Activated B cell treated with CpG ODN at 0.5 μM for 24 hours (primary cell): ENCODE measurements at regions of chr2 and their contacts with region 1.

Region 1: DNA sequence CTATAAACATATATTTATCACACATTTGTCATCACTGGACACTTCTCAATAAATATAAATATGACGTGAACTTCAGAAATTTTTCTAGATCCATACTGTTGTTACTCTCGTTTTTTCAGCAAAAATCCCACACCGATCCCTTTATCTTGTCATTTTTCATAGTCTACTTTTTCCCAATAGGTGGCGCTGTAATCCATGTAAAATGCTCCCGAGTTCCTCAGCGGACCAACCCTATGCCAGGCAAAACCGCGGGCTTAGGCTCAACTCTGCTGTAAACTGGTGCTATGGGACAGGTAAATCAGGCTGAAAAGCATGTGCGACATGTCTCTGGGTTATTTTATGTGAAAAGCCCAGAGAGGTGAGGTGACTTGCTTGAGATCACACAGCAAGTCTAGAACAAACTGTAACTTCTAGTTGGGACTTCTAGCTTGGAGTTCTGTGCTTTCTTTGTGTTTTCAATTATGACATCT is 104.0 kb downstream of the COBLL1 start:
- DNase-seq: peak; percentile 29
- ATAC-seq: peak; percentile 62
- H3K4me3 Mint-ChIP-seq: peak overlapping the region; percentile 21
- H3K27ac Mint-ChIP-seq: peak overlapping the region; percentile 74
- H3K4me1 Mint-ChIP-seq: peaks cover 72% of the 10 kb centered on the region
- H3K27me3 Mint-ChIP-seq: no peaks in the 10 kb centered on the region
- CTCF ChIP-seq: no peak

Region 2: GRCh38 chr2:164722616-164723338 is 14.9 kb before region 1 on chr2:
- CTCF ChIA-PET with region 1: no interaction called
- POLR2A ChIA-PET with region 1: no interaction called
- intact Hi-C with region 1: loop called (anchors 1 kb)
- DNase-seq: no peak
- ATAC-seq: no peak
- H3K4me3 Mint-ChIP-seq: no peak overlapping the region
- H3K27ac Mint-ChIP-seq: peak overlapping the region; percentile 12
- H3K4me1 Mint-ChIP-seq: peaks cover 19% of the 10 kb centered on the region
- H3K27me3 Mint-ChIP-seq: no peaks in the 10 kb centered on the region
- CTCF ChIP-seq: no peak

Region 3: DNA sequence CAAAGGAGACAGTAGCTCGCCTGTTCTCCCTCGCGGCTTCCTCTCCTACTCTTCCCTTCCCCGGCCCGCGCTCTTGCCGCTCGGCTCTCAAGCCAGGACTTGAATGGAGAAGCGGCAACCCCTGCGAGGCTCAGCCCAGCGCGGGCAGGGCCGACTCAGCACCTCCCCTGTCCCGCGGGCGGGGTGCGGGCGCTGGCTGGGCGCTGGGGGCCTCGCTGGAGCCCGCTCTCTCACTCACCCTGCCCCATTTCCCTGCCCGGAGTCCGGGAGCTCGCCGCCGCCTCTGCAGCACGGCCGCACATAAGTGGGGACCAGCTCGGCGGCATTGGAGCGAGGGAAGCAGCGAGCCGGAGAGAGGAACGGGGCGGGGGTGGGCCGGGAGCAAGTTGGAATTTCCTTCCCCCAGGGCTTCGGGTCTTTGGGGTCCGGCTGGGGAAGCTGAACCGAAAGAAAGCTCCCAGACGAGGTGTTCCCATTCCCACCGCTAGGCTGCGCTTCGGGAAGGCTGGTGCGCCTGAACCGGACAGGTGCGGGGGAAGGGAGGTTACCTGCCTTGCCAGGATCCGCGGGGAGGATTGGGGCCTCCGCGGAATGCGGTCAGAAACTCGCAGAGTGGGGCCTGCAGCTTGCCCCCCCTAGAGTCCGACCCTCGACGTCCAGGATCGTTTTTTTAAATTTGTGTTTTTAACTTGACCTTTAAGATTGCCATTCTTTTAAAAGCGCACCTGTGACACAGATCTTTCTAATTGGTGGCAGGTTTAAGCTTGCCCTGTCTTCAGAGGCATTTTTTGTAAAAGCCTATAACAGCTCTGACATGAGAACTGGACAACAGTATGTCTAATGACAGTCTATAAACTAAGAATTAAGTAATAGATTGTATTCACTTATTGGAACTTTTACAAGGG is 104.3 kb after region 1 on chr2 and contains the start of gene COBLL1:
- CTCF ChIA-PET with region 1: interaction called, 39 read pairs
- POLR2A ChIA-PET with region 1: interaction called, 44 read pairs
- intact Hi-C with region 1: loop called (anchors 1 kb)
- DNase-seq: peak; percentile 65
- ATAC-seq: peak; percentile 65
- H3K4me3 Mint-ChIP-seq: peak within 1 kb of the TSS; percentile 97
- H3K27ac Mint-ChIP-seq: peak within 1 kb of the TSS; percentile 91
- H3K4me1 Mint-ChIP-seq: peaks cover 44% of the 10 kb centered on the region
- H3K27me3 Mint-ChIP-seq: no peaks in the 10 kb centered on the region
- CTCF ChIP-seq: no peak
- total RNA-seq, gene COBLL1: 182 and 222 TPM in 2 replicates

Region 4: GRCh38 chr2:164974221-164974620 is 236.6 kb after region 1 on chr2:
- CTCF ChIA-PET with region 1: interaction called, 3 read pairs
- POLR2A ChIA-PET with region 1: no interaction called
- intact Hi-C with region 1: loop called (anchors 5 kb)
- DNase-seq: no peak
- ATAC-seq: no peak
- H3K4me3 Mint-ChIP-seq: peak overlapping the region; percentile 32
- H3K27ac Mint-ChIP-seq: peak overlapping the region; percentile 57
- H3K4me1 Mint-ChIP-seq: peaks cover 85% of the 10 kb centered on the region
- H3K27me3 Mint-ChIP-seq: no peaks in the 10 kb centered on the region
- CTCF ChIP-seq: no peak

Region 5: GRCh38 chr2:165203689-165204559 is 466.3 kb after region 1 on chr2 and contains the start of gene SCN3A:
- CTCF ChIA-PET with region 1: interaction called, 8 read pairs
- POLR2A ChIA-PET with region 1: no interaction called
- intact Hi-C with region 1: loop called (anchors 1 kb)
- DNase-seq: no peak
- ATAC-seq: peak; percentile 57
- H3K4me3 Mint-ChIP-seq: peak within 1 kb of the TSS; percentile 80
- H3K27ac Mint-ChIP-seq: peak within 1 kb of the TSS; percentile 73
- H3K4me1 Mint-ChIP-seq: peaks cover 29% of the 10 kb centered on the region
- H3K27me3 Mint-ChIP-seq: no peaks in the 10 kb centered on the region
- CTCF ChIP-seq: no peak
- total RNA-seq, gene SCN3A: 2.2 and 2.6 TPM in 2 replicates

Region 6: GRCh38 chr2:165874445-165875039 is 1136.9 kb after region 1 on chr2:
- CTCF ChIA-PET with region 1: no interaction called
- POLR2A ChIA-PET with region 1: no interaction called
- intact Hi-C with region 1: loop called (anchors 5 kb)
- DNase-seq: no peak
- ATAC-seq: peak; percentile 95
- H3K4me3 Mint-ChIP-seq: no peak overlapping the region
- H3K27ac Mint-ChIP-seq: no peak overlapping the region
- H3K4me1 Mint-ChIP-seq: peaks cover 7% of the 10 kb centered on the region
- H3K27me3 Mint-ChIP-seq: no peaks in the 10 kb centered on the region
- CTCF ChIP-seq: no peak